Dorsolateral prefrontal cortex (tissue), 120 donors: ENCODE measurements at regions of chr10 and their contacts with region 1.

Region 1: DNA sequence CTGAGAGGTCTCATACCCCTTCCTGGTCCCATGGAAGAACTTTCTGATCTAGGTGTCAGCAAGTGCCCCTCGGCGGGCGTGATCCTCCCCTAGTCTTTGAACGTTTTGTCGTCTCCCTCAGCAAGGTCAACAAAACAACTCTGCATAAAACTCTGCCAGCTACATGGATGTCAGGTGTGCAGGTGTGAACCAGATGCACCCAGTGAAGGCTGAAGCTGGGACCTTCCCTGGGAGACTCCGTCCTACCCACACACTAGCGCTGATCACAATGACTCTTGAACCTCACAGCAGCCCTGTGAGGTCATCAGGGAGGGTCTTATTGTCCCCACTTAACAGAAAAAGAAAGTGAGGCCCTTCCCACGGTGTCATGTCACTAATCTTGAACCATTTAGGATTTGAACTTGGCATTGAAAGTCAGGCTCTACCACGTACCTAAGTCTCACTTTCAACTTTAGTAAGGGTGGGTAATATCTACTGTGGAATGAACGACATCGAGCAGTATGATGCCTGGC is 68.1 kb downstream of the VSTM4 start:
- DNase-seq: no peak
- H3K4me3 ChIP-seq: no peak overlapping the region
- H3K27ac ChIP-seq: no peak overlapping the region
- H3K27me3 ChIP-seq: no peaks in the 10 kb centered on the region
- CTCF ChIP-seq: no peak

Region 2: GRCh38 chr10:49001402-49001801 is 45.8 kb before region 1 on chr10:
- intact Hi-C with region 1: no loop called
- DNase-seq: peak in 1 of 10 donors; percentile 23
- H3K4me3 ChIP-seq: no peak overlapping the region
- H3K27ac ChIP-seq: no peak overlapping the region
- H3K27me3 ChIP-seq: no peaks in the 10 kb centered on the region
- CTCF ChIP-seq: peak in 2 of 56 donors; percentile 10 to 11

Region 3: DNA sequence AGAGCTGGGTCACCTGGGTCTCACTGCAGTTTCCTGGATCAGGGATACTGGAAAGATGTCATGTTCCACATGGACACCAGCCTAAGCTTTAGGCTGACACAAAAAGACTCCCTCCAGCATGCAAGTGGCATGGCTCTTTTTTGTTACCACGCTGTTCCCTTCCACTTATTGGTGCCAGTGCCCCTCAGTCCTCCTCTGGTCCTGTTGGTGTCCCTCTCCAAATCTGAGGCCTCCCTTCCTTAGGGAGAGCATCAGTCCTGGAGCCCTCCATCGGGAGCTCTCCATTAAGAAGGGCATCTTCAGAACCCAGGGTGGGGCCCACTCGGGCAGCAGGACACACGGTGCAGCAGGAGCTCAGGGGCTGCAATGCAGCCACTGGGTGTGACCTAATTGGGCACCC is 31.5 kb before region 1 on chr10:
- intact Hi-C with region 1: loop called in 1 of 2 experiments (anchors 1 kb)
- DNase-seq: no peak
- H3K4me3 ChIP-seq: no peak overlapping the region
- H3K27ac ChIP-seq: no peak overlapping the region
- H3K27me3 ChIP-seq: no peaks in the 10 kb centered on the region
- CTCF ChIP-seq: no peak